ENCODE measurements at regions of chr6 and their contacts with region 1.

Region 1: DNA sequence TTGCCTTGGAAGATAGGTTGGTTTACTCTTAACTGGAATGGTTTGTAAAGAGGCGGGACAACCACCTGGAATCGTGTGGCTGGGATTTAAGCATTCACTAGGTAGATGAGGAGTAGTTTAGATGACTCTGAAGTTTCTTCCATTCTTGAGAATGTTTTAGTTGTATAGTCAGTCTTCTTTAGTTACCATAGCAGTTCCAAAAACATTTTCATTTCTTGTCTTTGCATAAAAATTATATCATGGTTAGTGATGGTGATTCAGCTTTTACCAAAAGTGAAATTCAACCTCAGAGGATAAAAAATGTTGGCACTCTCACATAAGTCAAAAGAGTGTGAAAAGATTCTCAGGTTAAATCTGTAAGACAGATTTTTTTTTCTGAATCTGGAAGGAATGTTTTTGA is 70.3 kb downstream of the SMAP1 start:
- DNase-seq: no peak
- H3K4me3 Mint-ChIP-seq: no peak overlapping the region
- H3K27ac Mint-ChIP-seq: peak overlapping the region; percentile 38
- H3K4me1 Mint-ChIP-seq: peaks cover 40% of the 10 kb centered on the region
- H3K27me3 Mint-ChIP-seq: no peaks in the 10 kb centered on the region

Region 2: DNA sequence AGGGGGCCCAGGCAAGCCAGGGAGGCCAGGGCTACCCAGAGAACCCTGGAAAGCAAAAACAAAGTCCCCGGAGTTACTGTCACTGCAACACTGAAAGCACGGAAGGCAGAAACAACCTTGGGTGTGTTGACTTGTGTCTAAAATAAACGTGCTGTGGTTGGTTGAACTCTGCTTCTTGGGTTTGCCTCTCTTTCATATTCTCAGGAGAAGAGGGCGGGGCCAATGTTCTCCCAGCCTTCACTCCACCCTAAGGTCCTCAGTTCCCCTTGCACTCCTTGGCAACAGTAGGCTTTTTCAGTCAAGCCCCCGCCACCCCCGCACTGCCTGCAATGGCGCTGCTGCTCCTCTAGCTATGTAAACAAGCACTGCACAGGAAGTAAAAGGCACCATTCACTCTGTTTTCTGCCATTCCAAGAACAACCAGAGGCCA is 496.0 kb before region 1 on chr6:
- CTCF ChIA-PET with region 1: no interaction called
- intact Hi-C with region 1: no loop called
- DNase-seq: no peak
- H3K4me3 Mint-ChIP-seq: no peak overlapping the region
- H3K27ac Mint-ChIP-seq: no peak overlapping the region
- H3K4me1 Mint-ChIP-seq: no peaks in the 10 kb centered on the region
- H3K27me3 Mint-ChIP-seq: peaks cover 3% of the 10 kb centered on the region

Region 3: DNA sequence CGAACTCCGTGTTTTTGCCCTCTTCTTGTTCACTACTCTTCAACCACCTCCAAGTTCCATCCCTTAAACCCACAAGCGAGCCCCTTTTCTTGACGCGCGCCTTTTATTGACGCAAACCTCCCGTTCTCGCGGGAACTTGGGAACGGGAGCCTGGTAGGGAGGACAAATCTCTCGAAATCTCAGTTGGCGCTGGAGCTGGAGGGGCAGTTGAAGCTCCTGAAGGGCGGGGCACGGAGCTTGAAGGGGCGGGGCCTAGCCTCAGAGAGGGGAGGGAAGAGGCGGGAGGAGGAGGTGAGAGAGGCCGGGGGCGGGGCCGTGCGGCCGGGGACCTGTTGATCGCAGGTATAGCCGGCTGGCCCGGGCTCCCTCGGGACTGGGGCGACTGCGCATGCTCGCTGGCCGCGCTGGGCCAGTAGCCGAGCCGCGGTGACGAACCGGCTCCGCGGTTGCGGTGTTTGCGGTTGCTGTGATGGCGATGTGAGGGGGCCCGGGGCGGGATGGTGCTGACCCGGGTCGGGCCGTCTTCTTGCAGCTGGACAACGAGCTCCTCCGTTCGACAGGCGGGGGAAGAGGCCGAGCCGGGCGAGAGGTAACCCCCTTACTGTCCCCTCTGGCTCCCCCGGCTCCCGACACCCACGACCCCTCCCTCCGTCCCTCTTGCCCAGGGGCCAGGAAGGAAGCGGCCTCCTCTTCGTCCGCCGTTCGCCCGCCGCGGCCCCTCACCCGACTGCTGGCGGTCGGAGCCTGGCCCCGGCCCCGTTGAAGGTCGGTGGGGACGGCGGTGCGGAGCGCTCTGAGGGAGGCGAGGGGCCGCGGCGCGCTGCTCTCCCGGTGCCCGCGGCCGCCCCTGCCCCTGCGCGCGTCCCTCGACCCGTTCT is 324.7 kb before region 1 on chr6 and contains the start of gene FAM135A:
- CTCF ChIA-PET with region 1: no interaction called
- intact Hi-C with region 1: loop called (anchors 2 kb)
- DNase-seq: peak; percentile 99
- H3K4me3 Mint-ChIP-seq: peak within 1 kb of the TSS; percentile 99
- H3K27ac Mint-ChIP-seq: peak within 1 kb of the TSS; percentile 84
- H3K4me1 Mint-ChIP-seq: peaks cover 16% of the 10 kb centered on the region
- H3K27me3 Mint-ChIP-seq: no peaks in the 10 kb centered on the region
- total RNA-seq, gene FAM135A: 11.5 to 11.9 TPM

Region 4: DNA sequence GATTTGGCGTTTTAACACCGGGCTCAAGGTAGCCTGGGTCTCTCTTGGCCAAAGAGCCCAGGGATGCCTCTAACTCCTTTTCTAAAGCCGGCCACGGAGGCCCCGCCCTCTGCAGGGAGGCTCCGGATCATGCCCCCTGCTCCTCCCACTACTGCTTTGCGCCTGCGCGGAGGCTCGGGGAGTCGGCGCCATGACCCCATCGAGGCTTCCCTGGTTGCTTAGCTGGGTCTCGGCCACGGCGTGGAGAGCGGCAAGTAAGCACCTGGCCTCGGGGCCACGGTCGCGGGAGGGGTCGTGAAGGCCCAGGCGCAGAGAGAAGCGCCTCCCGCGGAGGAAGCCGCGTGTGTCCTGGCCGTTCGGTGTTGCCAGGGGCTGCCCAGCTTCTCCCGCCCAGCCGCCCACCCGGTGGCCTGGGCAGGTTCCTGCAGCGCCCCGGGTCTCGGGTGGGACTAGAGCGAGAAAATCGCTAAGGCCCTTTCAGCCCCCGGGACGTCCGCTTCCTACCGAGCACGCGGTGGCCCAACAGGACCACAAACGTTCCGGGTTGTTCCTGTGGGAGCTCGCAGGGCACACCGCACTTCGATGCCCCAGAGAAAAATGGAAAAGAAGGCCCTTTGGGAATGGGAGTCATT is 171.2 kb before region 1 on chr6 and contains the start of gene SDHAF4:
- CTCF ChIA-PET with region 1: no interaction called
- intact Hi-C with region 1: loop called (anchors 5 kb)
- DNase-seq: peak; percentile 95
- H3K4me3 Mint-ChIP-seq: peak within 1 kb of the TSS; percentile 83
- H3K27ac Mint-ChIP-seq: peak within 1 kb of the TSS; percentile 83
- H3K4me1 Mint-ChIP-seq: peaks cover 11% of the 10 kb centered on the region
- H3K27me3 Mint-ChIP-seq: no peaks in the 10 kb centered on the region
- total RNA-seq, gene SDHAF4: 16.8 to 17.9 TPM

Region 5: DNA sequence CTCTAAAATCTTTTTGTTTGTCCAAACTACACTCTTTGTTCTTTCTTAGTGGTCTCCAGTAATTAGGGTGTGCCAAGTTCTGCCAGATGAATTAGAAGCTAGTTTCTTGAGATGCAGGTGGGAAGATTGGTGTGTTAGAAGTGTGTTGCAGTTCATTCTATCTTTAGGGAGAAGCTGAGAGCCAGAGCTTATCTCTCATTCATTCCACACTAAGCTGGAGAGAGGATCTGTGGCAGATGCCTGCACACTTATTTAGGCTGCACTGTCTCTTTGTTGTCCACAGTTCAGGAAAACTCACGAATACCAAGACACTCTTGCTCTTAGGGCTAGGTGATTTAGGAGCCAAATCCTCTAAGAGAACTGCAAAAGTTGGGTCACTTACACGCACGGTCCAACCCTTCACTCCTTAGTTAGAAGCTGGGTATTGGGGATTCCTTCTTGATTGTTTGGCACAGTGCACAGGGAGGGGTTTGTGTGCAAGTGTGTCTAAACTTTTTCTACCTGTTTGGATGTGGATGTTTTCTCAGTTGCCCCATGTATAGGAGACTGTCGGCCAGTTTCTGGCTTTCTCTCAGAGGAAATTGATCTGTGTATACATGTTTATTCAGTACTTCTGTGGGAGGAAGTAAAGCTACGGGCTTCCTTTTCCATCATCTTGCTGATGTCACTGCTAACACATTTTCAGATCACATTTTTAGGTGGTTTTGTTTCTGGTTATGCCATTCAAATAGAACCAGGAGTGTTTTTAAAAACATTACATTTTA is 20.8 kb before region 1 on chr6:
- CTCF ChIA-PET with region 1: interaction called, 3 read pairs
- intact Hi-C with region 1: loop called (anchors 1 kb)
- DNase-seq: peak; percentile 22
- H3K4me3 Mint-ChIP-seq: no peak overlapping the region
- H3K27ac Mint-ChIP-seq: peak overlapping the region; percentile 29
- H3K4me1 Mint-ChIP-seq: peaks cover 44% of the 10 kb centered on the region
- H3K27me3 Mint-ChIP-seq: no peaks in the 10 kb centered on the region

Region 6: GRCh38 chr6:70725817-70726415 is 12.1 kb before region 1 on chr6:
- CTCF ChIA-PET with region 1: no interaction called
- intact Hi-C with region 1: loop called (anchors 1 kb)
- DNase-seq: no peak
- H3K4me3 Mint-ChIP-seq: no peak overlapping the region
- H3K27ac Mint-ChIP-seq: no peak overlapping the region
- H3K4me1 Mint-ChIP-seq: peaks cover 41% of the 10 kb centered on the region
- H3K27me3 Mint-ChIP-seq: no peaks in the 10 kb centered on the region

Region 7: DNA sequence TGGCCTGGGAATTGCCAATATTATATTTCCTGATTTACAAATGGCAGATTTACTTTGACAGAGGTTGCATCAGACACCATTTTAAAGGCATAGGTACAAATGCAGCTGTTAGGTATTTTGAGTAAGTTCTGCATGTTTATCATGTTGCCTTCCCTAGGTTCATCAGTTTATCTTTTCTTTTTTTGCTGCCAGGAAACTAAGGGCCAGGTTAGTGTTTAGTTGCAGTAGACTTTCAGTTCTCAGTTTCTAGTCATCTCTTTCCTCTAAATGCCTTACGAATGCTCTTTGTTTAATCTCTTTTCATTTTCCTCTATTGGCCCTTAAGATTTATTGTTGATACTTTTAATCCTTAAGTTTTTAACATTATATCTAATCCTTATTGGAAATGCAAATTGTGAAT is 59.6 kb after region 1 on chr6:
- CTCF ChIA-PET with region 1: no interaction called
- intact Hi-C with region 1: loop called (anchors 2 kb)
- DNase-seq: no peak
- H3K4me3 Mint-ChIP-seq: no peak overlapping the region
- H3K27ac Mint-ChIP-seq: no peak overlapping the region
- H3K4me1 Mint-ChIP-seq: peaks cover 26% of the 10 kb centered on the region
- H3K27me3 Mint-ChIP-seq: no peaks in the 10 kb centered on the region